Activated naive CD4-positive, alpha-beta T cell treated with anti-CD3 and anti-CD28 coated beads for 36 hours (primary cell): ENCODE measurements at regions of chr1 and their contacts with region 1.

Region 1: GRCh38 chr1:219173758-219174588 is at the start of gene LYPLAL1:
- DNase-seq: peak; percentile 86
- H3K4me3 Mint-ChIP-seq: peak within 1 kb of the TSS; percentile 99
- H3K27ac Mint-ChIP-seq: peak within 1 kb of the TSS; percentile 96
- H3K4me1 Mint-ChIP-seq: peaks cover 48% of the 10 kb centered on the region
- H3K27me3 Mint-ChIP-seq: no peaks in the 10 kb centered on the region
- total RNA-seq, gene LYPLAL1: 19.9 to 21.8 TPM

Region 2: GRCh38 chr1:218284934-218285635 is 888.9 kb before region 1 on chr1 and contains the start of gene RRP15:
- CTCF ChIA-PET with region 1: no interaction called
- intact Hi-C with region 1: loop called (anchors 1 kb)
- DNase-seq: peak; percentile 92
- H3K4me3 Mint-ChIP-seq: peak within 1 kb of the TSS; percentile 95
- H3K27ac Mint-ChIP-seq: peak within 1 kb of the TSS; percentile 83
- H3K4me1 Mint-ChIP-seq: peaks cover 26% of the 10 kb centered on the region
- H3K27me3 Mint-ChIP-seq: peaks cover 6% of the 10 kb centered on the region
- total RNA-seq, gene RRP15: 12.6 to 13.7 TPM

Region 3: DNA sequence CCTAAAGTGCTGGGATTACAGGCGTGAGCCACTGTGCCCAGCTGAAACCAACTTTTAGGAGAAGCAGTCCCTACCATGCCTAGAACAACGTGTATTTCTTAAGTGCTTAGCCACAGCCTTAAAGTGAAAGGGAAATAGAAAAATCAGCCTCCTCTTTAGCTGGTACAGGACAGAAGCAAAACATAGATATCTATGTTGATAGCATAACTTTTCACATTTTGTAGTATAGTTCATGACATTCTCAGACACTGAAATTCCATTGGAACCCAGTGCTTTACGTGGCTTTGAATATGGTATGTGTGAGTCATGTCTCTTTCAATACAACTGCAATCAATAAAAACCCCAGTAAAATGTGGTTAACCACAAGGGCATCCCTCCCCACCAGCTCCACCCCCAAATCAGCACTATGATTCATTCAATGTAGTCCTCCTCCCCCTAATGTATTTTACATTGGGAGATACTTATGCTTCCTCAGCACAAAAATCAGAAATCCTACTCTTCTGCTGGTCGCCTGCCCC is 796.8 kb before region 1 on chr1:
- CTCF ChIA-PET with region 1: no interaction called
- intact Hi-C with region 1: loop called (anchors 10 kb)
- DNase-seq: peak; percentile 84
- H3K4me3 Mint-ChIP-seq: no peak overlapping the region
- H3K27ac Mint-ChIP-seq: no peak overlapping the region
- H3K4me1 Mint-ChIP-seq: peaks cover 16% of the 10 kb centered on the region
- H3K27me3 Mint-ChIP-seq: peaks cover 61% of the 10 kb centered on the region

Region 4: GRCh38 chr1:219189021-219189824 is 15.2 kb after region 1 on chr1:
- CTCF ChIA-PET with region 1: interaction called, 10 read pairs
- intact Hi-C with region 1: loop called (anchors 1 kb)
- DNase-seq: no peak
- H3K4me3 Mint-ChIP-seq: no peak overlapping the region
- H3K27ac Mint-ChIP-seq: peak overlapping the region; percentile 43
- H3K4me1 Mint-ChIP-seq: peaks cover 32% of the 10 kb centered on the region
- H3K27me3 Mint-ChIP-seq: no peaks in the 10 kb centered on the region

Region 5: DNA sequence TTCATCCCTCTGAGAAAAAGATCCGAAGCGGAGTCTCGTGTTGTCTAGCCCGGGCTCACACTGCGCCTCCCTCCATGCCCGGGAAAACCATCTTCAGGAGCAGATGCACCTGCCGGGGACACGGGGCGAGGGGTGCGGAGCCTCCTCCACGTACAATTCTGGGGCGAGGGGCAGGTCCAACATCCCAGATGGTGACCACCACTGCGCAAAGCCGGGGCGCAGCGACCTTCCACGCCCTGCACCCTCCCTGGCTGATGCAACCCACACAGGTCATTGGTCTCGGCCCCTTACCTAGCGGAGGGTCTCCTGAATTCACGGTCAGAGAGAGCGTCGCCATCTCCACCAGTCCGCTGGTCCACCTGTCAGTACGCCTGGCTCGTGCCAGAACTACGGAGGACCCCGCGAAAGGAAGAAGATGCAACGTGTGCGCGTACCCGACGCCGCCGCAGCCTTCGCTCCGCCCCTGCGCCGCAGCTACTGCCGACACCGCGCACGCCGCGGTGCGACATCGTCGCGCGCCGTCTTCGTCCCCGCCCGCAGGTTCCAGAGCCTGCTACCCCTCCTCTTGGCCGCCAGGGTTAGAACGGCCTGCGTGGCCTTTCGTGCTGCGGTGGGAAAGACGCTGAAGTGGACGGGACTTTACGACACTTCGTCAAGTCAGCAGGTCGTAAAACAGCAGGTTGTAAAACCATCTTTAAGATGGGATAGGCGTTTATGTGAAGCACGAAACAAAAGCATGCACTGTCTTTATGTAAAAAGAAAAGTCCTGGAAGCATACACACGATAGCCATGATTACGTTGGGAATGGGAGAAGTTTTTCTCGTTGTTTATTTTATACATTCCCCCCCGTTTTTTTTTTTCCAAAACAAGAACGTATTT is 872.3 kb after region 1 on chr1 and contains the start of gene EPRS1:
- CTCF ChIA-PET with region 1: no interaction called
- intact Hi-C with region 1: loop called (anchors 5 kb)
- DNase-seq: peak; percentile 95
- H3K4me3 Mint-ChIP-seq: peak within 1 kb of the TSS; percentile 99
- H3K27ac Mint-ChIP-seq: peak within 1 kb of the TSS; percentile 98
- H3K4me1 Mint-ChIP-seq: peaks cover 27% of the 10 kb centered on the region
- H3K27me3 Mint-ChIP-seq: no peaks in the 10 kb centered on the region
- total RNA-seq, gene EPRS1: 227 to 229 TPM

Region 6: DNA sequence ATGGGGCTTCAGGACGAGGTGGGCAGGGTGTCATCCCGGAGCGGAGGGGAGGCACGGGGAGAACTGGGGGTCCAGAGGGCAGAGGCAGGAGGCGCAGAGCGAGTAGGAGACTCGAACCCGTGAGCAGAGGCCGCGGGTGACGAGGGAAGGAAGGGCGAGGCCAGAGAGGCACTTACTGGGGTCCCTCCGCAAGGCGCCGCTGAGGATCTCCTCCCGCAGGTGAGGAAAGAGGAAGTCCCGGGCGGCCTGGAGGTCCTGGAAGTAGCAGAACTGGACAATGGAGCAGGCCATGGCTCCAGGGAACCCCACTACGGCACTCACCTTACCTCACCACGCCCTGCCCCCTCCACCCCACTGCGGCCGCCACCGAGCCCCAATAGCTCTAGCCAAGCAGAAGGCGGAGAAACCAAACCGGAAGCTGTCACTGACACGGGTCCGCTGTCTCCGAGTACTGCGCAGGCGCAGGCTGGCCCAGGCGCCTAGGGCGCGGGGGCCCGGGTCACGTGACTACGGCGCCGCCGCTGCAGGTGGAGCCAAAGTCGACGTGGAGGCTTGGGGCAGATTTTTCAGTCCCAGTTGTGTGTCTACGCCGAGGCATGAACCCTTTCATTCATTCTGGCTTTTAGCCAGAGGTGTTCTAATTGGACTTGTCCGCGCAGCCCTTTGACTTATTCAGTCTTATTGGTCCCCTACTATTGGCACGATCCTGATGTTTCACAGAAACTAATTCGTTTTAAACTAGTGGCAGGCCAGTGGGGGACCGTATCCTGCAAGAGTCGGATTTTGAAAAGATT is 1098.3 kb after region 1 on chr1 and contains the start of gene RAB3GAP2:
- CTCF ChIA-PET with region 1: no interaction called
- intact Hi-C with region 1: loop called (anchors 2 kb)
- DNase-seq: peak; percentile 97
- H3K4me3 Mint-ChIP-seq: no peak within 1 kb of the TSS
- H3K27ac Mint-ChIP-seq: no peak within 1 kb of the TSS
- H3K4me1 Mint-ChIP-seq: peaks cover 24% of the 10 kb centered on the region
- H3K27me3 Mint-ChIP-seq: peaks cover 6% of the 10 kb centered on the region
- total RNA-seq, gene RAB3GAP2: 37.3 to 39.6 TPM